Caco-2 (cell line): ENCODE measurements at regions of chr17 and their contacts with region 1.

Region 1: GRCh38 chr17:73166731-73167581 is 2.1 kb downstream of the SSTR2 start:
- DNase-seq: no peak
- H3K4me3 ChIP-seq: no peak overlapping the region
- H3K4me3 Mint-ChIP-seq: peak overlapping the region; percentile 83
- H3K27ac Mint-ChIP-seq: no peak overlapping the region
- H3K4me1 ChIP-seq: peaks cover 6% of the 10 kb centered on the region; the same call in 1 of the 2 replicates
- H3K4me1 Mint-ChIP-seq: peaks cover 13% of the 10 kb centered on the region
- H3K27me3 ChIP-seq: peaks cover 8% of the 10 kb centered on the region
- H3K27me3 Mint-ChIP-seq: peaks cover 20% of the 10 kb centered on the region
- CTCF ChIP-seq: no peak

Region 2: DNA sequence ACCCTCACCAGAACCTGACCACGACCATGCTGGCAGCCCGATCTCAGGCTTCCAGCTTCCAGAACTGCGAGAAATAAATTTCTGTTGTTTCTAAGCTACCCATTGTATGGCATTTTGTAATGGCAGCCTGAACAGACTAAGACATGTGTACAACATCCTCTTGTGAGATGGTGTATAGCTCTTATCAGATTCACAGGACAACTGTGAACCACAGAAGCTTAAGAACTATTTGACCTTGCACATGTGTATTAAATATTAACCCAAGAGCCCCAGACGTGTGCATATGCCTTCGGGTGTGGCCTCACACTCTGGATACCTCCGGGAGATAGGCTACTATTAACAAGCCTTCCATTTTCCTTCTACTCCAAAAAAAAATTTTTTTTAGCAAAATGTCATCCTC is 323.4 kb before region 1 on chr17:
- CTCF ChIA-PET with region 1: interaction called, 10 read pairs
- POLR2A ChIA-PET with region 1: no interaction called
- intact Hi-C with region 1: no loop called
- DNase-seq: peak; percentile 20 to 42
- H3K4me3 ChIP-seq: no peak overlapping the region
- H3K4me3 Mint-ChIP-seq: no peak overlapping the region
- H3K27ac Mint-ChIP-seq: no peak overlapping the region
- H3K4me1 ChIP-seq: 0 out of 2 replicates have a peak, but pooled peaks cover 6% of the 10 kb centered on the region
- H3K4me1 Mint-ChIP-seq: peaks cover 5% of the 10 kb centered on the region
- H3K27me3 ChIP-seq: no peaks in the 10 kb centered on the region
- H3K27me3 Mint-ChIP-seq: no peaks in the 10 kb centered on the region
- CTCF ChIP-seq: no peak

Region 3: GRCh38 chr17:73240561-73240960 is 73.6 kb after region 1 on chr17:
- CTCF ChIA-PET with region 1: no interaction called
- POLR2A ChIA-PET with region 1: no interaction called
- intact Hi-C with region 1: no loop called
- DNase-seq: no peak
- H3K4me3 ChIP-seq: no peak overlapping the region
- H3K4me3 Mint-ChIP-seq: no peak overlapping the region
- H3K27ac Mint-ChIP-seq: no peak overlapping the region
- H3K4me1 ChIP-seq: no peaks in the 10 kb centered on the region
- H3K4me1 Mint-ChIP-seq: no peaks in the 10 kb centered on the region
- H3K27me3 ChIP-seq: no peaks in the 10 kb centered on the region
- H3K27me3 Mint-ChIP-seq: no peaks in the 10 kb centered on the region
- CTCF ChIP-seq: no peak